ENCODE measurements at regions of chr17 and their contacts with region 1.

Region 1: GRCh38 chr17:50087246-50087911 is 7.8 kb upstream of the PDK2 start:
- DNase-seq: peak; percentile 67 to 80 (median 71)
- H3K4me3 ChIP-seq: no peak overlapping the region
- H3K4me3 Mint-ChIP-seq: no peak overlapping the region
- H3K27ac ChIP-seq: no peak overlapping the region
- H3K27ac Mint-ChIP-seq: peak overlapping the region in 1 of 7 donors; percentile 59
- H3K4me1 ChIP-seq: no peaks in the 10 kb centered on the region
- H3K4me1 Mint-ChIP-seq: no peaks in the 10 kb centered on the region
- H3K27me3 ChIP-seq: no peaks in the 10 kb centered on the region
- H3K27me3 Mint-ChIP-seq: peaks cover 0 to 2% of the 10 kb centered on the region in 2 donors

Region 2: GRCh38 chr17:49873466-49873865 is 213.9 kb before region 1 on chr17:
- CTCF ChIA-PET with region 1: no interaction called
- POLR2A ChIA-PET with region 1: no interaction called
- intact Hi-C with region 1: no loop called
- DNase-seq: no peak
- H3K4me3 ChIP-seq: no peak overlapping the region
- H3K4me3 Mint-ChIP-seq: peak overlapping the region in 1 of 8 donors; percentile 29
- H3K27ac ChIP-seq: no peak overlapping the region
- H3K27ac Mint-ChIP-seq: peak overlapping the region in 3 of 7 donors; percentile 7 to 57 (median 19)
- H3K4me1 ChIP-seq: peaks cover 14% of the 10 kb centered on the region
- H3K4me1 Mint-ChIP-seq: peaks cover 9 to 22% (median 13%) of the 10 kb centered on the region in 4 donors
- H3K27me3 ChIP-seq: no peaks in the 10 kb centered on the region
- H3K27me3 Mint-ChIP-seq: peaks cover 5 to 13% of the 10 kb centered on the region in 2 donors

Region 3: GRCh38 chr17:50020841-50021599 is 66.4 kb before region 1 on chr17:
- CTCF ChIA-PET with region 1: interaction called, 174 read pairs
- POLR2A ChIA-PET with region 1: no interaction called
- intact Hi-C with region 1: no loop called
- DNase-seq: no peak
- H3K4me3 ChIP-seq: no peak overlapping the region
- H3K4me3 Mint-ChIP-seq: no peak overlapping the region
- H3K27ac ChIP-seq: no peak overlapping the region
- H3K27ac Mint-ChIP-seq: no peak overlapping the region
- H3K4me1 ChIP-seq: no peaks in the 10 kb centered on the region
- H3K4me1 Mint-ChIP-seq: no peaks in the 10 kb centered on the region
- H3K27me3 ChIP-seq: peaks cover 3% of the 10 kb centered on the region
- H3K27me3 Mint-ChIP-seq: peaks cover 12 to 19% of the 10 kb centered on the region in 2 donors

Region 4: GRCh38 chr17:50026901-50027630 is 60.3 kb before region 1 on chr17:
- CTCF ChIA-PET with region 1: interaction called, 174 read pairs
- POLR2A ChIA-PET with region 1: interaction called, 5 read pairs
- intact Hi-C with region 1: no loop called
- DNase-seq: peak; percentile 69 to 75 (median 71)
- H3K4me3 ChIP-seq: no peak overlapping the region
- H3K4me3 Mint-ChIP-seq: peak overlapping the region in 3 of 8 donors; percentile 17 to 56 (median 39)
- H3K27ac ChIP-seq: no peak overlapping the region
- H3K27ac Mint-ChIP-seq: no peak overlapping the region
- H3K4me1 ChIP-seq: peaks cover 8% of the 10 kb centered on the region
- H3K4me1 Mint-ChIP-seq: peaks cover 2 to 21% (median 9%) of the 10 kb centered on the region in 4 donors
- H3K27me3 ChIP-seq: no peaks in the 10 kb centered on the region
- H3K27me3 Mint-ChIP-seq: peaks cover 19 to 22% of the 10 kb centered on the region in 2 donors

Region 5: DNA sequence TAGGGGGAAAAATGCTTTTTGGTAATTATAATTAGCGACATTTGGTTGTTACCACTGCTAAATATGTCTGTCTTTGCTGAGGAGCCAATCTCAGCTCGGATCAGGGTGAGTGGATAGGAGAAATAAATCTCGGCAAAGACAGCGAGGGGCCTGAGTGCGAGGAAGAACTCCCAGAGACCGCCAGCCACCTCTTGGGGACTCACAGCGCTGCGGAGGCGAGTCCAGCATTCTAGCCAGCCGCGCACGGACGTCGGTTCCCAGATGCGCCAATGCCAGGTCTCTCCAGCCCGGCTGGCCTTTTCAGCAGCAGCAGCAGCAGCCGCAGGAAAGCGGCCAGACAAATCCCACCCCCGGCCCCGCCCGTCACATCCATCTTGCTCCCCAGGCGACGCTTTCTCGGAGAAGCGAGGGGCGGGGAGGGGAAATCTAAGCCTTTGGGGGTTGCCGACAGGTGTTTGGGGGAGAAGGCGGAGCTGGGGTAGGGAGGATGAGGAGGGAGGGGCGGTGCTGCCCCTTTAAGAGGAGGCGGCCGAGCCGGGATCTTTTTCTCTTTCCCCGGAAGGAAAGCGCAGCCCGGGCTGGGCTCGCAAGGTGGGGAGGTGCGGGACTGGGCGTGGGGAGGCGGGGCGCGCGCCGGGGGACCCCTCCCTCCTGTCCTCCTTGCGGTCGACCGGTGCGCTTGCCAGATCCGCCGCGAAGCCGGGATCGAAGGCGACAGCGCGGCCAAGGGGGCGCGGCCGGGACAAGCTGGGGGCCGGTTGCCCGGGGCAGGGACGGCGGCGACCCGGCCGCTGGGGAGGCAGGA is 31.8 kb before region 1 on chr17 and contains the start of gene ITGA3:
- CTCF ChIA-PET with region 1: interaction called, 27 read pairs
- POLR2A ChIA-PET with region 1: interaction called, 38 read pairs
- intact Hi-C with region 1: no loop called
- DNase-seq: peak; percentile 46 to 77 (median 49)
- H3K4me3 ChIP-seq: peak within 1 kb of the TSS; percentile 74 to 87
- H3K4me3 Mint-ChIP-seq: peak within 1 kb of the TSS; percentile 91 to 99 (median 94)
- H3K27ac ChIP-seq: peak within 1 kb of the TSS; percentile 60
- H3K27ac Mint-ChIP-seq: peak within 1 kb of the TSS; percentile 85 to 93 (median 88)
- H3K4me1 ChIP-seq: peaks cover 12% of the 10 kb centered on the region
- H3K4me1 Mint-ChIP-seq: peaks cover 13 to 50% (median 27%) of the 10 kb centered on the region in 4 donors
- H3K27me3 ChIP-seq: no peaks in the 10 kb centered on the region
- H3K27me3 Mint-ChIP-seq: no peaks in the 10 kb centered on the region
- total RNA-seq, gene ITGA3: 13.9 to 16.3 TPM

Region 6: DNA sequence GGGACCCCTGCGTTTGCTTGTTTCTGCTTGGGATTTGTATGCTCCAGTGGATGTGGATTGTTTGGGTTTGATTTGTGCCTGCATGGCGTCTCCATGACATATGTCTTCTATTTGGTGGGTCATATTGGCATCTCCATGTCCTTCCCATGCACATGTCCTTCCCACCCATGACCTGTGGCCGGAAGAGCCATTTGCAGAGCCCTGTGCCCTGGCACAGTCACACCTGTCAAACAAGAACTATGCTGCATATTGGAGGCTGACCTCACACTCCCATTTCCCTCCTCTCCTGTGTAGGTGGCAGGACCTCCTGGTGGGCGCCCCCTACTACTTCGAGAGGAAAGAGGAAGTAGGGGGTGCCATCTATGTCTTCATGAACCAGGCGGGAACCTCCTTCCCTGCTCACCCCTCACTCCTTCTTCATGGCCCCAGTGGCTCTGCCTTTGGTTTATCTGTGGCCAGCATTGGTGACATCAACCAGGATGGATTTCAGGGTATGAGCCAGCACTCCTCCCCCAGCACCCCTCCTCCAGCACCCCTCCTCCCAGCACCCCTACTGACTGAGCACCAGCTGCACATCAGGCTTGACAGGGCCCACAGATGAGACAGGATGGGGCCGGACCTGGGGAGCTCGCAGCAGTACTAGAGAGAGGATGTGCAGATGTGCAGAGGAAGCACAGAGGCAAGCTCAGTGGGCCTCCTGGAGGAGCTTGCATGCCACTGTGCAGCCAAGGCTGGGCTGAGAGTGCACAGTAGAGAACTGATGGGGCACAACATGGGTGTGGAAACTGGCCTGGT is 15.5 kb before region 1 on chr17:
- CTCF ChIA-PET with region 1: interaction called, 17 read pairs
- POLR2A ChIA-PET with region 1: no interaction called
- intact Hi-C with region 1: no loop called
- DNase-seq: peak in 1 of 5 donors; percentile 14
- H3K4me3 ChIP-seq: no peak overlapping the region
- H3K4me3 Mint-ChIP-seq: peak overlapping the region in 1 of 8 donors; percentile 6
- H3K27ac ChIP-seq: no peak overlapping the region
- H3K27ac Mint-ChIP-seq: no peak overlapping the region
- H3K4me1 ChIP-seq: no peaks in the 10 kb centered on the region
- H3K4me1 Mint-ChIP-seq: no peaks in the 10 kb centered on the region
- H3K27me3 ChIP-seq: no peaks in the 10 kb centered on the region
- H3K27me3 Mint-ChIP-seq: no peaks in the 10 kb centered on the region

Measured in CD4-positive, alpha-beta memory T cell (primary cell).